Activated CD4-positive, alpha-beta T cell treated with anti-CD3 and anti-CD28 coated beads for 36 hours (primary cell): ENCODE measurements at regions of chr4 and their contacts with region 1.

Region 1: GRCh38 chr4:44629280-44629866 is 22.1 kb downstream of the YIPF7 start:
- DNase-seq: peak; percentile 59
- ATAC-seq: peak; percentile 82
- H3K4me3 Mint-ChIP-seq: no peak overlapping the region
- H3K27ac Mint-ChIP-seq: no peak overlapping the region
- H3K4me1 Mint-ChIP-seq: peaks cover 2% of the 10 kb centered on the region
- H3K27me3 Mint-ChIP-seq: no peaks in the 10 kb centered on the region

Region 2: DNA sequence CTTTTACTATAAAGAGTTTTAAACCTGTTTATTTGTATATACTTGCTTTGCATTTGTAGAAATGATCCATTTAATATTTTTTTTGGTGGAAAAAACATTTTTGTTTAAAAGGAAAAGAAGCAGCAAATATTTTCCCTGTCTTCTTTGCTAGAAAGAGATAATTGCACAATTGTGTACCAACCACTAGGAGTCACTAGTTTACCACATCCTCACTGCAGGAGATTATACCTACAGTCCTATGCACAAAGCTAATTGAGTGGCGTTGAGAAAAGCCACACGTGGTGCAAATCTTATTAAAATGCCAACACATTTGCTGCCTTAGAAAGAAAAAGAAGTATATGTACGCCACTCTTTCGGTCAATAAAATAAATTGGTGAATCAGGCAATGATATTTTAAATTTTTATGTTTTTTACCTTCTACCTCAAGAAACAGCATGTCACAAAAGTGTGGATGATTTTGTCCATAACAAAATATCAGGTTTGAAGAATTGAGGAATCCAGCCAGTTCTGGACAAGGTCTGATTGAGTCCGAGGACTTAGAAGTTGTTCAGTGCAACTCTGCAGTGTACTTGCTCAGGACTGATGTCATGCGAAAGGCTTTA is 1633.9 kb before region 1 on chr4:
- CTCF ChIA-PET with region 1: no interaction called
- POLR2A ChIA-PET with region 1: no interaction called
- intact Hi-C with region 1: loop called in 1 of 2 experiments (anchors 1 kb)
- DNase-seq: no peak
- ATAC-seq: peak; percentile 53
- H3K4me3 Mint-ChIP-seq: no peak overlapping the region
- H3K27ac Mint-ChIP-seq: no peak overlapping the region
- H3K4me1 Mint-ChIP-seq: no peaks in the 10 kb centered on the region
- H3K27me3 Mint-ChIP-seq: peaks cover 2% of the 10 kb centered on the region

Region 3: DNA sequence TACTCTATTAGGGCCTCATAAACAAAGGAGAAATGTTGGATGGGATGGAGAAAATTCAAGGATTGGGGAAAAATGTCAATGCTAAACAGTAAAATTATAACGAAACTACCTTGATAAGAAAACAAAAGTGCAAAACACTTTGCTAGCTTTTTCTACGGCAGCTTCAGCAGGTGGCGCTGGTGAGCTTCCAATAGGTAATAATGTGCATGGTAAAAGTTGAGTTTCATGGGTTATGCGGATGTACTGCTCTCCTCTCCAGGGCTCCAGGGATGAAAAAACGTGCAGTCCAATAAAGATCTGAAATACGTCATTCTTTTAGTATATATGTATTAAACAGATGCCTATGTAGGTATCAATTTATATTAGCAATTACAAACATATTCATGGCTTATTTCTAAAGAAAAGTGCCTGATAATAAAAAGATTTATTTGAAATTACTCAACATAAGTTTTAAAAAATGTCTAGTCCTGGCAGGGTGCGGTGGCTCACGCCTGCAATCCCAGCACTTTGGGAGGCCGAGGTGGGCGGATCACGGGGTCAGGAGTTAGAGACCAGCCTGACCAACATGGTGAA is 1497.3 kb before region 1 on chr4:
- CTCF ChIA-PET with region 1: no interaction called
- POLR2A ChIA-PET with region 1: no interaction called
- intact Hi-C with region 1: loop called (anchors 1 to 10 kb)
- DNase-seq: peak; percentile 77
- ATAC-seq: no peak
- H3K4me3 Mint-ChIP-seq: no peak overlapping the region
- H3K27ac Mint-ChIP-seq: no peak overlapping the region
- H3K4me1 Mint-ChIP-seq: no peaks in the 10 kb centered on the region
- H3K27me3 Mint-ChIP-seq: no peaks in the 10 kb centered on the region

Region 4: GRCh38 chr4:43776371-43776770 is 853.0 kb before region 1 on chr4:
- CTCF ChIA-PET with region 1: no interaction called
- POLR2A ChIA-PET with region 1: no interaction called
- intact Hi-C with region 1: loop called (anchors 2 to 10 kb)
- DNase-seq: no peak
- ATAC-seq: no peak
- H3K4me3 Mint-ChIP-seq: no peak overlapping the region
- H3K27ac Mint-ChIP-seq: no peak overlapping the region
- H3K4me1 Mint-ChIP-seq: no peaks in the 10 kb centered on the region
- H3K27me3 Mint-ChIP-seq: no peaks in the 10 kb centered on the region

Region 5: DNA sequence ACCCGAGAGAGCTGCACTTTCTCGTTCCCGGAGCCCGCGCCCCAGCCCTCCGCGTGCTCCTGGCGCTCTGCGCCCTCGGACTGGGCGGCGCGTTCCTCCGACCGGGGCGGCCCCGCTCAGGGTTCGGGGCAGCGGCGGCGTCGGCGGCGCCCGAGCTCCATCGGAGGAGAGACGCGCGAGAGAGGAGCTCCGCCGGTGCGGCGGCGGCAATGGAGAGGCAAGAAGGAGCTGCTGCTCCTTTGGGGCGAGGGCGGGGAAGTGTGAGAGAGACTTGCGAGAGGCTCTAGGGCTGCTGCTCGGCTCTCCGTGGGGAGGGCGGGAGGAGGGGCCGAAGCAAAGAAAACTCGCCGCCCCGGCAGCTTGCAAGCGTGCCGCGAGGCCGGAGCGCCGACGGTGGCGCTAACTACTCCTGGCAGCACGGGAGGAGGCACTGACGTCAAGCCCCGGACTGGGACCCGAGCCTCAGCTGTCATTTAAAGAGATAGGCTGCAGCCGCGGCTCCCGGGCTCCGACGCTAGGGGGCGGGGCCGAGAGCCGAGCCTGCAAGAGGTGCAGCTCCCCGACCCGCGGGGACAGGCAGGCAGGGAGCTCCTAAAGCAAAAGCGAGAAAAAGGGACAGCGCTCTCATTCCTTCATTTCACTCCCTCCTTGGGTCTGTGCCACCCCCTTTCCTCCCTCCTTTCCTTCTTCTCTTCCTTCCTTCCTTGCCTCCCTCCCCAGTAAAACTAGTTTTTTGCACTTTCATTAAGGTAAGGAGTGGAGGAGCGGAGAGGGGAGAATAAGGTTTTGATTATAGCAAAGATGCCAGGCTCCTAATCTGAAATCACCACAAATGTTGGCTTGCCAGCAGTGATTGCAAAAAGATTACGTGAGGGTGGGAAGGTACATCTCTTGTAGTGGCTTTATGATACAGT is 180.6 kb before region 1 on chr4 and contains the start of gene KCTD8:
- CTCF ChIA-PET with region 1: no interaction called
- POLR2A ChIA-PET with region 1: no interaction called
- intact Hi-C with region 1: loop called (anchors 2 to 5 kb)
- DNase-seq: peak; percentile 86
- ATAC-seq: peak; percentile 96
- H3K4me3 Mint-ChIP-seq: peak within 1 kb of the TSS; percentile 52
- H3K27ac Mint-ChIP-seq: no peak within 1 kb of the TSS
- H3K4me1 Mint-ChIP-seq: peaks cover 8% of the 10 kb centered on the region
- H3K27me3 Mint-ChIP-seq: peaks cover 47% of the 10 kb centered on the region
- total RNA-seq, gene KCTD8: not detected